ENCODE measurements at regions of chr7 and their contacts with region 1.

Region 1: GRCh38 chr7:129433847-129434674 is at the start of gene STRIP2:
- DNase-seq: peak; percentile 94
- H3K4me3 Mint-ChIP-seq: peak within 1 kb of the TSS; percentile 93
- H3K27ac Mint-ChIP-seq: peak within 1 kb of the TSS; percentile 88
- H3K4me1 Mint-ChIP-seq: peaks cover 37% of the 10 kb centered on the region
- H3K27me3 Mint-ChIP-seq: peaks cover 6% of the 10 kb centered on the region
- total RNA-seq, gene STRIP2: 10.7 to 12.1 TPM

Region 2: GRCh38 chr7:129315960-129316359 is 118.1 kb before region 1 on chr7:
- CTCF ChIA-PET with region 1: no interaction called
- POLR2A ChIA-PET with region 1: no interaction called
- DNase-seq: no peak
- H3K4me3 Mint-ChIP-seq: no peak overlapping the region
- H3K27ac Mint-ChIP-seq: no peak overlapping the region
- H3K4me1 Mint-ChIP-seq: no peaks in the 10 kb centered on the region
- H3K27me3 Mint-ChIP-seq: no peaks in the 10 kb centered on the region

Region 3: GRCh38 chr7:129367700-129368388 is 66.2 kb before region 1 on chr7:
- CTCF ChIA-PET with region 1: interaction called, 18 read pairs
- POLR2A ChIA-PET with region 1: interaction called, 8 read pairs
- DNase-seq: peak; percentile 82
- H3K4me3 Mint-ChIP-seq: peak overlapping the region; percentile 62
- H3K27ac Mint-ChIP-seq: peak overlapping the region; percentile 83
- H3K4me1 Mint-ChIP-seq: peaks cover 37% of the 10 kb centered on the region
- H3K27me3 Mint-ChIP-seq: no peaks in the 10 kb centered on the region

Region 4: DNA sequence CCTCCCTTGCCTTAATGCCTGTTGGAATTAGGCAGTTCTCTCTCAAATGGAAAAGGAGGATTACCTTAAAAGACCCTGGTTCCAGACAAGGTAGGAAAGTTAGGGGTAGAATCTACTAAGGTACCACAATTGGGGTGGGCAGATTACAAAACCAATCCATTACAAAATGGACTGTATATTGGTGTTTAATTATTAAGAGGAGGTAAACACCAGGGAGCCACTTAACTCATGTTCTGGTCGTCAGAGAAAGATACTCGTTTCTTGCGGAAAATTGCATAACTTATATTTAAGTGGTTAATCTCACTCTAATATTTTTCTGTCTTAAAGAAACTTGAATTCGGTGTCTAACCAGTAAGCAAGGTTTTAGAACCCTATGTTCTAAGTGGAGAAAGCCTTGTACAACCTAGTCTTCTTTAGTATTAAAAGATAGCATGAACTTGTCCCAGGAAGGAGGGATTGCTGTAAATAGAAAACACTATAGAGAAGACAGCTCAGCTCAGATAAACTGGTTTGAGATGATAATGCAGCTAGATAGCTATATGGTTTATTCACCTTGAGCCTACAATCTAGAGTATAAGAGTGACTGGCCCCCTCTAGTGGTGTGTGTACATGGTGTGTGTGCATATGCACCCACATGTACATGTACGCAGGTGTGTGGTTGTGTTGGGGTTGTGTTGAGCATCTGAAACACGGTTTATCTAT is 57.8 kb before region 1 on chr7:
- CTCF ChIA-PET with region 1: interaction called, 16 read pairs
- POLR2A ChIA-PET with region 1: no interaction called
- DNase-seq: peak; percentile 68
- H3K4me3 Mint-ChIP-seq: no peak overlapping the region
- H3K27ac Mint-ChIP-seq: no peak overlapping the region
- H3K4me1 Mint-ChIP-seq: peaks cover 28% of the 10 kb centered on the region
- H3K27me3 Mint-ChIP-seq: no peaks in the 10 kb centered on the region

Region 5: DNA sequence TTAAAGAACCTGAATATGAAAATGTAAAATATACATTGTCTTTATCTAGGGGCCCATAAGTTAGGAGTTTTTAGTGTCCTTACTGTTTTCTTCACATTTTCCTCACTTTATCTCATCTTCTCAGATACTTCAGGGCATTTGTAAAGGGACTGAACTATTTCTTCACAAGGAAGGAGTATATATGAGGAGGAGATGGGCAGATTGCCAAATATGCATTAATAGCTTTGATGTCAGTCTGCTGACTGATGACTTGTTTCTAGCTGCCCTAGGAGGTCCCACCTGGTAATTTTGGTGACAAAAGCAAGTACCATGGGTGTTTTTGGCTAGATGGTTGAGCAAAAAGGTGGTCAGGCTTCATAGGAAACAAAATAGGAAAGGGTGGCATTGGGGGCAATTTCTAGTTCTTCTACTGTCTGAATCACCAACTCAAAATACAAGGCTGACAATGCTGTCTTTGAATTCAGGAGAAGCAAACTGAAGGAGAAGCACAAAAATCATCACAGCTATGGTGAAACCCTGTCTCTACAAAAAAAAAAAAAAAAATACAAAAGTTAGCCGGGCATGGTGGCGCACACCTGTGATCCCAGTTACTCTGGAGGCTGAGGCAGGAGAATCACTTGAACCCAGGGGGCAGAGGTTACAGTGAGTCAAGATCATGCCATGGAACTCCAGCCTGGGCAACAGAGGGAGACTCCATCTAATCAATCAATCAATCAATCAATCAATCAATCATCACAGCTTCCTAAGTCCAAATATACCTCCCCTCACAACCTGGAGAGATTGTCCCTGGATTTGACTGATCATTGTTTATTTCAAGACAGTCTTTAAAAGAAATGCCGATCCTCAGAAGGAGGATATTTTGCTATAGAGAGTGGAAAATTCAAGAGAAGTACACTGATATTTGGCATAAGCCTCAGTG is 10.1 kb before region 1 on chr7:
- CTCF ChIA-PET with region 1: interaction called, 11 read pairs
- POLR2A ChIA-PET with region 1: no interaction called
- DNase-seq: no peak
- H3K4me3 Mint-ChIP-seq: no peak overlapping the region
- H3K27ac Mint-ChIP-seq: no peak overlapping the region
- H3K4me1 Mint-ChIP-seq: peaks cover 10% of the 10 kb centered on the region
- H3K27me3 Mint-ChIP-seq: no peaks in the 10 kb centered on the region

Region 6: DNA sequence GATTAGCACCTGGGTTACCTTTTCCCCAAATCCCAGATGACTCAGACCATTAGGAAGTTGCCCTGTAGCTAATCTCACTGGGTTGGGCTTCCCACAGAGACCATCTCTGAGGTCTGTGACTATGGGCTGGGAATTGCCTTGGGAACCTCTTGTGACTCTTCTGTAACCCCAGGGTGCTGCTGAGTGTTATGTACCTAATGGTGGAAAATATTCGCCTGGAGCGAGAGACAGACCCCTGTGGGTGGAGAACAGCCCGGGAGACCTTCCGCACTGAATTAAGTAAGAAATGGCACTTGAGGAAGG is 20.1 kb after region 1 on chr7:
- CTCF ChIA-PET with region 1: interaction called, 12 read pairs
- POLR2A ChIA-PET with region 1: interaction called, 3 read pairs
- DNase-seq: no peak
- H3K4me3 Mint-ChIP-seq: no peak overlapping the region
- H3K27ac Mint-ChIP-seq: peak overlapping the region; percentile 14
- H3K4me1 Mint-ChIP-seq: no peaks in the 10 kb centered on the region
- H3K27me3 Mint-ChIP-seq: no peaks in the 10 kb centered on the region

Measured in activated CD4-positive, alpha-beta T cell treated with anti-CD3 and anti-CD28 coated beads, Interleukin-2, amount 10 ng/mL, durations not matched to agents 7 days and 5 days (primary cell).